ENCODE measurements at regions of chr5 and their contacts with region 1.

Region 1: DNA sequence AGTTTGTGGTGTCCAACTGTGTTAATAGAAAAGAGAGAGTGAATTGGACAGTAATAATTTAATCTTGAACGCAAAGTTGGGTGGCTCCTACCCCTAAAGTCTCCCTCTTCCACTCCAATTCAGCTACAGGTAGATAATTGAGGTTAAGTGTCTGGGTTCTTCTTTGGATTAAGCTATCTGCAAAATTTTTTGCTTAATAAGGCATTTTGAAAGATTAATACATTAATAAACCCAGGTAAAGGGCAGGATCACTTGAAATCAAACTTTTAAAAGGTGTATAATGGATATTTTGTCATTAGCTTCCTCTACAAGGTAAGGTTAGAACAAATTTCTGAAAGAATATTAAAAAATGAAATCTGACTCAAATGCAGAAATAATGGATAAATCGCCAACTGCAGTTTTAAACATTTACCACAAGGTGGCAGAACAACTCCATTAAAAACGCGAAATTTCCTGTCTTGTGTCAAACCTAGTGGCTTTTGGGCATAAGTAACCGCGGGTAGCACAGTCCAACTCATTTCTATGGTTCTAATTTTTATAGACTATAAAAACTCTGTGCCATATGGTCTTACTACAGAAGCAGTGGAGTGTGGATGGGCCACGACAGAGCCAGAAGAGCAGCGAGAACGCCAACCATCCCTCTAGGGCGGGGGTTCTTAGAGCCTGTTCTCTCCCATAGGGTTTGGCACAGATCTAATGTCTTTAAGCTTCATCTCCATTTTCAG is 276.5 kb downstream of the ARHGEF28 start:
- DNase-seq: peak; percentile 58
- H3K4me3 ChIP-seq: no peak overlapping the region; a peak in 1 of 4 replicates
- H3K27ac ChIP-seq: no peak overlapping the region; a peak in 1 of 4 replicates
- H3K4me1 ChIP-seq: peaks cover 0 to 28% of the 10 kb centered on the region in 2 experiments; a peak in 2 of 4 replicates
- H3K27me3 ChIP-seq: no peaks in the 10 kb centered on the region
- CTCF ChIP-seq: peak; percentile 87
- EP300 ChIP-seq: no peak
- RAD21 ChIP-seq: peak; percentile 94

Region 2: DNA sequence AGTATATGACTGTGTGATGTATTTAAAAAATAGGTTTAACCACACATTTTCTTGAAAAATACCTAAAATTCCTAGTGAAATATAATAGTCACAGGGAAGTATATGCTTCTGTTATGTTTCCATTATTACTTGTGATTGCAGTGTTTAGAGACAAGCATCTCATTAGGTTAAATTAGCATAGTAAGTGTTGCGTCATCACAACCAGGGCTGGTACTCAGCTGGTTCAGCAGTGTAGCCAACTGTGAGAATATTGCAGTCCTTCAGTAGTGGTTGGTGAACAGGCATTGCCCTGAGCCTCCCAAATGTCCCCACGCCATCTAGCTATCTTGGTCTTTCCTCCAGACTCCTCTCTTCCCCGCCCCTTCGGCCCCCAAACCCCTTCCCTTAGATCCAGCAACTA is 14.8 kb before region 1 on chr5:
- CTCF ChIA-PET with region 1: interaction called, 17 read pairs
- POLR2A ChIA-PET with region 1: no interaction called
- DNase-seq: no peak
- H3K4me3 ChIP-seq: no peak overlapping the region
- H3K27ac ChIP-seq: no peak overlapping the region
- H3K4me1 ChIP-seq: no peaks in the 10 kb centered on the region; a peak in 1 of 4 replicates
- H3K27me3 ChIP-seq: no peaks in the 10 kb centered on the region
- CTCF ChIP-seq: no peak
- EP300 ChIP-seq: no peak
- RAD21 ChIP-seq: no peak

Region 3: DNA sequence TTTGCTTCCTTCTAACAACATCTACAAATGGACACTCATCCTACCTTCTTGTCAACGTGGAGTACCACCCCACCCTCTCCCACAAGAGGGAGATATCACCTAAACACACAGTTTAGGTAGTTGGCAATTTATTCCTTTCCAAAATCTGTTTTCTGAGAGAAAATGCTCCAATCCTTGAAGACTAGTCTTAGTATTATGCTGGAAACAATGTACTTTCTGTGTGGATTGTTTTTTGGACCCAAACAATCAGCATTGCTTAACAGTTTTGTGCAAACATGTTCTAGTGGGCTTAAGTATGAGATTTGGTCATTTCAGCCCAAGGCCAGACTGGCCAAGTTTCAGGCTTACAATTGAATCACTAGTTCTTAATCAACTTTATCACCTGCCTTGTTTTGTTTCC is 82.7 kb after region 1 on chr5:
- CTCF ChIA-PET with region 1: no interaction called
- POLR2A ChIA-PET with region 1: no interaction called
- DNase-seq: peak; percentile 22
- H3K4me3 ChIP-seq: no peak overlapping the region
- H3K27ac ChIP-seq: no peak overlapping the region
- H3K4me1 ChIP-seq: no peaks in the 10 kb centered on the region
- H3K27me3 ChIP-seq: no peaks in the 10 kb centered on the region
- CTCF ChIP-seq: peak; percentile 55
- EP300 ChIP-seq: no peak
- RAD21 ChIP-seq: peak; percentile 66

Region 4: GRCh38 chr5:74648835-74649293 is 746.4 kb after region 1 on chr5:
- CTCF ChIA-PET with region 1: interaction called, 124 read pairs
- POLR2A ChIA-PET with region 1: no interaction called
- DNase-seq: peak; percentile 69
- H3K4me3 ChIP-seq: no peak overlapping the region; a peak in 1 of 4 replicates
- H3K27ac ChIP-seq: no peak overlapping the region
- H3K4me1 ChIP-seq: peaks cover 7 to 11% of the 10 kb centered on the region in 2 experiments; a peak in 2 of 4 replicates
- H3K27me3 ChIP-seq: no peaks in the 10 kb centered on the region
- CTCF ChIP-seq: peak; percentile 80
- EP300 ChIP-seq: 0 out of 4 replicates have a peak, but pooled peaks of 1 of the 2 experiments have one; percentile 11
- RAD21 ChIP-seq: peak; percentile 95

Region 5: GRCh38 chr5:74653991-74654390 is 751.5 kb after region 1 on chr5:
- CTCF ChIA-PET with region 1: interaction called, 51 read pairs
- POLR2A ChIA-PET with region 1: no interaction called
- DNase-seq: no peak
- H3K4me3 ChIP-seq: no peak overlapping the region
- H3K27ac ChIP-seq: no peak overlapping the region
- H3K4me1 ChIP-seq: peaks cover 0 to 2% of the 10 kb centered on the region in 2 experiments; a peak in 1 of 4 replicates
- H3K27me3 ChIP-seq: no peaks in the 10 kb centered on the region
- CTCF ChIP-seq: no peak
- EP300 ChIP-seq: no peak
- RAD21 ChIP-seq: no peak

Region 6: GRCh38 chr5:74660140-74660539 is 757.7 kb after region 1 on chr5:
- CTCF ChIA-PET with region 1: interaction called, 25 read pairs
- POLR2A ChIA-PET with region 1: no interaction called
- DNase-seq: no peak
- H3K4me3 ChIP-seq: no peak overlapping the region
- H3K27ac ChIP-seq: peak overlapping the region in 1 of 2 experiments; percentile 33; a peak in 1 of 4 replicates
- H3K4me1 ChIP-seq: no peaks in the 10 kb centered on the region
- H3K27me3 ChIP-seq: no peaks in the 10 kb centered on the region
- CTCF ChIP-seq: no peak
- EP300 ChIP-seq: no peak
- RAD21 ChIP-seq: no peak

Measured in SK-N-SH (cell line).